GM12878 (cell line): ENCODE measurements at regions of chr3 and their contacts with region 1.

Region 1: DNA sequence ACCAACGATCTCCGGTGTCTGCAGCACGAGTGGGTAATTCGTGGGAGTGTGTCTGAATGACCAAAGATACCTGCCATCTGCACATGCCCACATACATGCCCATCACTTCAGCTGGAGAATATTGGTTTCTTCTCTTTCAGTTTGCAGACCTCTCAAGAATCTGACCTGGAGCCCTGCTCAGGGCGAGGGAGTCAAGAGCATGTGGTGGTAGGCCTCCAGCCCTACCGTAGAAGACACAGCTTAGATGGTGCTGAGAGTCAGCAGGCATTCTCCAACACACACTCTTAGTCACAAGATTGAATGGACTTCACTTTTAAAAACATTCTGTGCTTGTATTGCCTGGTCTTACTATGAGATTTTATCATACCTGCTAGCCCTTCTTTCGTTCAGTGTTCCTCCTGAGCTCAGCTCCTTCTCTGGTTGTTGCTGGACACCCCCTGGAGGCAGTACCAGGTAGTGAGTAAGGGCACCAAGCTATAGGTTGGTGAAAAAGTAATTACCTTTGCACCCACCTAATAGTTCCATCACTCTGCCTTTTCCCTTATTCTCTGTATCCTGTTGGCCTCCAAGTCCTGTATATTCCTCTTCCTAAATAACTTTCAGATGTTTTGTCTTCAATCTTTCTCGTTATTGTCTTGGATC is 252.0 kb downstream of the CACNA2D3 start:
- DNase-seq: no peak
- ATAC-seq: peak; percentile 74
- H3K4me3 ChIP-seq: no peak overlapping the region
- H3K27ac ChIP-seq: no peak overlapping the region
- H3K4me1 ChIP-seq: no peaks in the 10 kb centered on the region
- H3K27me3 ChIP-seq: peaks cover 0 to under 1% of the 10 kb centered on the region in 2 experiments; a peak in 2 of 4 replicates
- CTCF ChIP-seq: peak; percentile 34 to 48 (median 43); a peak in 4 of 6 replicates
- EP300 ChIP-seq: no peak
- POLR2A ChIP-seq: no peak
- RAD21 ChIP-seq: peak; percentile 52

Region 2: GRCh38 chr3:54146506-54147239 is 227.7 kb before region 1 on chr3:
- CTCF ChIA-PET with region 1: interaction called, 3 read pairs
- POLR2A ChIA-PET with region 1: no interaction called
- RAD21 ChIA-PET with region 1: no interaction called
- SMC1A ChIA-PET with region 1: no interaction called
- in situ Hi-C with region 1: no loop called
- intact Hi-C with region 1: loop called (anchors 5 kb)
- DNase-seq: no peak
- ATAC-seq: peak; percentile 90
- H3K4me3 ChIP-seq: no peak overlapping the region
- H3K27ac ChIP-seq: no peak overlapping the region
- H3K4me1 ChIP-seq: no peaks in the 10 kb centered on the region
- H3K27me3 ChIP-seq: no peaks in the 10 kb centered on the region
- CTCF ChIP-seq: peak; percentile 36 to 50 (median 49); a peak in 5 of 6 replicates
- EP300 ChIP-seq: no peak
- POLR2A ChIP-seq: no peak
- RAD21 ChIP-seq: peak; percentile 45; the same call in 1 of the 2 replicates

Region 3: DNA sequence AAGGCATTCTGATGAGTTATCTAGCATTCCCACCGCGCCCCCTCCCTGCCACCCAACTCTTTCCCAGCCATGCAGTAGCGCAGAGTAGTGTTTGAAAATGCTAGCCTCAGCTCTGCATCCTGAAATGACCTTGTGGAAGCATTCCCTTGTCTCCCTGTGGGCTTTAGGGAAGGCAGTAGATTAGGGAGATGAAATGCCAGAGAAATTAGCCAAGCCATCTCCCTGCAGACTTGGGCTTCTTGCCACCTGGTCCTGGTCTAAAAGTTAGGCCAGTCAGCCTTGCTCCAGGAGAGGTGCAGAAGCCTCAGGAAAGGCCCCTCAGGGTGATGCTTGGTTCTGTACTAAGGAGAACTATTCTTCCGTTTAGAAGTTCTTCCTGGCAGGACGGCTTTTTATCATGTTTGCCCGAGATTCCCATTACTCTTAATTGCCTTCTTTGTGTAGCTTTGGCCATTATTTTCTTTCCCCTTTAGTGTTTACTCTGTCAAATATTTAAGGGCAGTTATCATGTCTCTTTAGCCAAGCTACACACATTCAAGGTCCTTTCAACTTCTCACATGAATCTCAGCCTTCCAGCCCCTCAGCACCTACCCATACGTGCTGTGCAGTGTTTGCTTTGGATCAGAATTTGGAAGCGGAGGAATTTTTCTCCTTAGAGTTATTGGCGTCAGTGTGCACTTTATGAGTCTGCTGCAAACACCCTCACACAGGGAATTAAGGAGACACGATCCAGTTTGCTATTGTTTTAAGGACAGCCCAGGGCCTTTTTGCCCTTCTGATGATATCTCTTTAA is 20.6 kb before region 1 on chr3:
- CTCF ChIA-PET with region 1: no interaction called
- POLR2A ChIA-PET with region 1: no interaction called
- RAD21 ChIA-PET with region 1: no interaction called
- SMC1A ChIA-PET with region 1: no interaction called
- in situ Hi-C with region 1: no loop called
- intact Hi-C with region 1: no loop called
- DNase-seq: no peak
- ATAC-seq: no peak
- H3K4me3 ChIP-seq: no peak overlapping the region
- H3K27ac ChIP-seq: no peak overlapping the region
- H3K4me1 ChIP-seq: no peaks in the 10 kb centered on the region
- H3K27me3 ChIP-seq: no peaks in the 10 kb centered on the region
- CTCF ChIP-seq: no peak
- EP300 ChIP-seq: no peak
- POLR2A ChIP-seq: no peak
- RAD21 ChIP-seq: no peak

Region 4: GRCh38 chr3:54393150-54393549 is 18.8 kb after region 1 on chr3:
- CTCF ChIA-PET with region 1: no interaction called
- POLR2A ChIA-PET with region 1: no interaction called
- RAD21 ChIA-PET with region 1: no interaction called
- SMC1A ChIA-PET with region 1: no interaction called
- in situ Hi-C with region 1: no loop called
- intact Hi-C with region 1: no loop called
- DNase-seq: no peak
- ATAC-seq: no peak
- H3K4me3 ChIP-seq: no peak overlapping the region
- H3K27ac ChIP-seq: no peak overlapping the region
- H3K4me1 ChIP-seq: no peaks in the 10 kb centered on the region
- H3K27me3 ChIP-seq: no peaks in the 10 kb centered on the region
- CTCF ChIP-seq: no peak
- EP300 ChIP-seq: no peak
- POLR2A ChIP-seq: no peak
- RAD21 ChIP-seq: no peak